Sciatic nerve (tissue), 2 donors: ENCODE measurements at regions of chr7 and their contacts with region 1.

Region 1: DNA sequence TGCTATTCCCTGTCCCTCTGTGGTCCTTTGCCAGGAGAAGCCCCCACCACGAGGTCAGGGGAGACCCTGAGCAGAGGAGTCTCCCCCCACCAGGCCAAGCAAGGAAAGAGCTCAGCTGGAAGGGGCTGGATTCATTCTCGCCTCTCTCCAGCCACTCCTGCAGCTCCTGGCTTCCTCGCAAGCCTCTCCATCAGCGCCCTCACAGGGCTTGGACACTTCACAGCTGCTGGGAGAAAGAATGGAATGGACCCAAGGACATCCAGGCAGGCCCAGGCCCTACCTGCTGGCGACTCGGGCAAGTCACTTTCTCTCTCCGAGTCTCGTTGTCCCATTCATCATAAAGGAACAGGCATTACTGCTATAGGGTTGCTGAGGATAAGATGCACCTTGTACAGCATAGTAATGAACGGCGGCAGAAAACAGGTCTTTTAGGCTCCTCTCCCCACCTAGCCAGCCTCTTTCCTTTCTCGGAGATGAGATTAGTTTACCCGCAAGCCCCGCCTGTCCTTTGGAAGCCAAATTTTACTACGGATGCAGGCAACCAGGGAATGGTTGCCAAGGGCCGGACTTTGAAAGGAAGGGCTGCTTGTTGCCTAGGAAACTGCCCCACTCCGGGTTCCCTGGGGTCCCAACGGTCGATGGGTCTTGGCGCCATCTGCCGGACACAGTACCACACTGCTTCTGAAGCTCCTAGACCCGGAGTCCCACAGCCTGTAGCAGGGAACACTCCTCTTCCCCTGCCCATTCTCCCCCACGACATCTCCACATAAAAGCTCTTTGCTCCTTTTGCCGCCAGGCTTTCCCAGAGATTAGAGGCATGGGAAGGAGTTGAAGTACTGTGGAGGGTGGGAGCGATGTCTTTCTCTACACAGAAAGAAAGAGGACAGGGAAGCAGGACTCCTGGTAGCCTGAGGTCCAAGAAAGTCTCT is 22.3 kb downstream of the IMPDH1 start:
- DNase-seq: peak; percentile 92
- ATAC-seq: peak; percentile 94

Region 2: DNA sequence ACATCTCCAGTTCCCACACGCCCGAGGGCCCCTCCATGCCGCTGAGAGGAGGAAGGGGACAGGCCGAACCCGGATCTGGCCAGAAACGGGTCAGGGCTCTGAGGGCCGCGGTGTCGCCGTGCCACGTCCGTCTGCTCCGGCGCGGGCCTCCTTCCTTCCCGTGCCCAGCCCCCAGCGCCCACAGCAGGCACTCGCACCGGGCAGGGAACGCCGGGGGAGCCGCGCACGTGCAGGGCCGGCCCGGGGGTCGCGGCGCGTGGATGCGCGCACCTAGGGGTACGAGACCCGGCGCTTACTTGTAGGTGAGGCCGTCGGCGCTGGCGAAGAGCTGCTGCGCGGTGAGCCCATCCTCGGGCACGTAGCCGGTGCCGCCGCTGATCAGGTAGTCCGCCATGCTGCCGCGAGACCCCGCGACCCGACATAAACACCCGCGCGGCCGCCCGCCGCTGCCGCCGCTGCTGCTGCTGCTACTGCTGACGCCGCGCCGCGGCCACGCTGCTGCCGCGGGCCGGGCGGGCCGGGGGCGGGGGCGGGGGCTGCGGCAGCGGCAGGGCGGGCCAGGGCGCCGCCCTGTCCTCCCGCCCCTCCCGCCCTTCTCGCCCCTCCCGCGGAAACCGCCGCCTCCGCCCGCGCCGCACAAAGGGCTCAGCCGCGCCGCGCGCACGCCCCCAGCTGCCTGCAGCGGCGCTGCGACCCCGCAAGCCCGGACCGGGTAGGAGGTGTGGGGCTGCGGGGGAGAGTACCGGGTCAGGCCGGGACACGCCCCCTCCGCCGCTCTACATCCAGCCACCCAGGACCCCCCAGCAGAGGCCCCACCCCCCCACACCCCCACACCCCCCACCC is 18.2 kb after region 1 on chr7:
- intact Hi-C with region 1: loop called (anchors 1 kb)
- DNase-seq: no peak
- ATAC-seq: no peak